ENCODE measurements at regions of chr9 and their contacts with region 1.

Region 1: GRCh38 chr9:134738869-134739659 is 97.5 kb downstream of the COL5A1 start:
- DNase-seq: peak; percentile 72 to 79
- H3K4me3 ChIP-seq: no peak overlapping the region
- H3K4me3 Mint-ChIP-seq: no peak overlapping the region
- H3K27ac Mint-ChIP-seq: no peak overlapping the region
- H3K4me1 ChIP-seq: no peaks in the 10 kb centered on the region
- H3K4me1 Mint-ChIP-seq: no peaks in the 10 kb centered on the region
- H3K27me3 ChIP-seq: no peaks in the 10 kb centered on the region
- H3K27me3 Mint-ChIP-seq: peaks cover 17% of the 10 kb centered on the region
- CTCF ChIP-seq: peak; percentile 90 to 93

Region 2: GRCh38 chr9:134626571-134627416 is 112.3 kb before region 1 on chr9:
- CTCF ChIA-PET with region 1: no interaction called
- POLR2A ChIA-PET with region 1: no interaction called
- intact Hi-C with region 1: no loop called
- DNase-seq: peak in 1 of 2 experiments; percentile 21
- H3K4me3 ChIP-seq: no peak overlapping the region
- H3K4me3 Mint-ChIP-seq: no peak overlapping the region
- H3K27ac Mint-ChIP-seq: no peak overlapping the region
- H3K4me1 ChIP-seq: peaks cover 11% of the 10 kb centered on the region; the same call in 1 of the 2 replicates
- H3K4me1 Mint-ChIP-seq: peaks cover 17% of the 10 kb centered on the region
- H3K27me3 ChIP-seq: no peaks in the 10 kb centered on the region
- H3K27me3 Mint-ChIP-seq: no peaks in the 10 kb centered on the region
- CTCF ChIP-seq: no peak

Region 3: GRCh38 chr9:134698587-134699342 is 40.3 kb before region 1 on chr9:
- CTCF ChIA-PET with region 1: interaction called, 11 read pairs
- POLR2A ChIA-PET with region 1: no interaction called
- intact Hi-C with region 1: loop called (anchors 1 kb)
- DNase-seq: peak; percentile 74 to 83
- H3K4me3 ChIP-seq: no peak overlapping the region
- H3K4me3 Mint-ChIP-seq: no peak overlapping the region
- H3K27ac Mint-ChIP-seq: no peak overlapping the region
- H3K4me1 ChIP-seq: no peaks in the 10 kb centered on the region
- H3K4me1 Mint-ChIP-seq: no peaks in the 10 kb centered on the region
- H3K27me3 ChIP-seq: no peaks in the 10 kb centered on the region
- H3K27me3 Mint-ChIP-seq: no peaks in the 10 kb centered on the region
- CTCF ChIP-seq: peak; percentile 90 to 93

Region 4: GRCh38 chr9:134896005-134896833 is 157.2 kb after region 1 on chr9:
- CTCF ChIA-PET with region 1: no interaction called
- POLR2A ChIA-PET with region 1: no interaction called
- intact Hi-C with region 1: no loop called
- DNase-seq: no peak
- H3K4me3 ChIP-seq: no peak overlapping the region
- H3K4me3 Mint-ChIP-seq: no peak overlapping the region
- H3K27ac Mint-ChIP-seq: no peak overlapping the region
- H3K4me1 ChIP-seq: no peaks in the 10 kb centered on the region
- H3K4me1 Mint-ChIP-seq: no peaks in the 10 kb centered on the region
- H3K27me3 ChIP-seq: no peaks in the 10 kb centered on the region; the same call in 1 of the 2 replicates
- H3K27me3 Mint-ChIP-seq: peaks cover 7% of the 10 kb centered on the region
- CTCF ChIP-seq: no peak

Measured in Caco-2 (cell line).